Panc1 (cell line): ENCODE measurements at regions of chr1 and their contacts with region 1.

Region 1: GRCh38 chr1:17984583-17984982 is 123.0 kb upstream of the IGSF21 start:
- DNase-seq: no peak
- ATAC-seq: no peak
- H3K4me3 ChIP-seq: no peak overlapping the region
- H3K27ac ChIP-seq: no peak overlapping the region
- H3K4me1 ChIP-seq: no peaks in the 10 kb centered on the region
- H3K27me3 ChIP-seq: peaks cover 2% of the 10 kb centered on the region
- CTCF ChIP-seq: peak; percentile 80

Region 2: GRCh38 chr1:17742583-17742982 is 242.0 kb before region 1 on chr1:
- CTCF ChIA-PET with region 1: no interaction called
- POLR2A ChIA-PET with region 1: no interaction called
- in situ Hi-C with region 1: no loop called
- intact Hi-C with region 1: no loop called
- DNase-seq: no peak
- ATAC-seq: no peak
- H3K4me3 ChIP-seq: no peak overlapping the region
- H3K27ac ChIP-seq: no peak overlapping the region
- H3K4me1 ChIP-seq: no peaks in the 10 kb centered on the region
- H3K27me3 ChIP-seq: peaks cover 11% of the 10 kb centered on the region
- CTCF ChIP-seq: no peak

Region 3: DNA sequence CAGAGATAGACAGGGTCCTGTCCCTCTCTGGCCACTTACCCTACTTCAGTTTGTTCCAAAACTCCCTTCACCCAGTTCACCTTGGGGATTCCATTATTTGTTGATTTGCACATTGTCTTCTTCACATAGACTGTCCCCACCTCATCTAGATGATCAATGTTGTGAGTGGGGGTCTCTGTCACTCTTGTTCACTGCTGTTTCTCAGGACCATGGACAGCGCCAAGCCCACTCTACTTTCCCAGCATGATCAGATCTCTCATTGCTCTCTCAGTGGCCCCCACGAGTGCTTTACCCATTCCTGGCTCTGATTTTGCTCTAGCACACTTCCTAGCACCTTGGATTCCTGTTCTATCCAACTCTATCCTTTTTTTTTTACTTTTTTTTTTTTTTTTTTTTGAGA is 77.6 kb after region 1 on chr1:
- CTCF ChIA-PET with region 1: no interaction called
- POLR2A ChIA-PET with region 1: no interaction called
- in situ Hi-C with region 1: no loop called
- intact Hi-C with region 1: no loop called
- DNase-seq: no peak
- ATAC-seq: no peak
- H3K4me3 ChIP-seq: no peak overlapping the region
- H3K27ac ChIP-seq: no peak overlapping the region
- H3K4me1 ChIP-seq: no peaks in the 10 kb centered on the region
- H3K27me3 ChIP-seq: peaks cover 6% of the 10 kb centered on the region; the same call in 1 of the 2 replicates
- CTCF ChIP-seq: no peak

Region 4: GRCh38 chr1:18100491-18101063 is 116.0 kb after region 1 on chr1:
- CTCF ChIA-PET with region 1: no interaction called
- POLR2A ChIA-PET with region 1: no interaction called
- in situ Hi-C with region 1: no loop called
- intact Hi-C with region 1: loop called (anchors 10 kb)
- DNase-seq: peak; percentile 30
- ATAC-seq: peak; percentile 77
- H3K4me3 ChIP-seq: no peak overlapping the region
- H3K27ac ChIP-seq: no peak overlapping the region
- H3K4me1 ChIP-seq: no peaks in the 10 kb centered on the region
- H3K27me3 ChIP-seq: peaks cover 9% of the 10 kb centered on the region; the same call in 1 of the 2 replicates
- CTCF ChIP-seq: peak; percentile 88